A673 (cell line): ENCODE measurements at regions of chr10 and their contacts with region 1.

Region 1: GRCh38 chr10:119028900-119029612 is 458 bp upstream of the NANOS1 start:
- DNase-seq: peak; percentile 94
- H3K4me3 ChIP-seq: peak overlapping the region; percentile 50
- H3K27ac ChIP-seq: no peak overlapping the region
- H3K4me1 ChIP-seq: no peaks in the 10 kb centered on the region
- H3K27me3 ChIP-seq: no peaks in the 10 kb centered on the region
- CTCF ChIP-seq: no peak

Region 2: GRCh38 chr10:119061352-119061751 is 32.3 kb after region 1 on chr10:
- CTCF ChIA-PET with region 1: no interaction called
- POLR2A ChIA-PET with region 1: no interaction called
- intact Hi-C with region 1: loop called (anchors 5 kb)
- DNase-seq: no peak
- H3K4me3 ChIP-seq: no peak overlapping the region
- H3K27ac ChIP-seq: no peak overlapping the region
- H3K4me1 ChIP-seq: peaks cover 17% of the 10 kb centered on the region
- H3K27me3 ChIP-seq: no peaks in the 10 kb centered on the region
- CTCF ChIP-seq: no peak